ENCODE measurements at regions of chr19 and their contacts with region 1.

Region 1: DNA sequence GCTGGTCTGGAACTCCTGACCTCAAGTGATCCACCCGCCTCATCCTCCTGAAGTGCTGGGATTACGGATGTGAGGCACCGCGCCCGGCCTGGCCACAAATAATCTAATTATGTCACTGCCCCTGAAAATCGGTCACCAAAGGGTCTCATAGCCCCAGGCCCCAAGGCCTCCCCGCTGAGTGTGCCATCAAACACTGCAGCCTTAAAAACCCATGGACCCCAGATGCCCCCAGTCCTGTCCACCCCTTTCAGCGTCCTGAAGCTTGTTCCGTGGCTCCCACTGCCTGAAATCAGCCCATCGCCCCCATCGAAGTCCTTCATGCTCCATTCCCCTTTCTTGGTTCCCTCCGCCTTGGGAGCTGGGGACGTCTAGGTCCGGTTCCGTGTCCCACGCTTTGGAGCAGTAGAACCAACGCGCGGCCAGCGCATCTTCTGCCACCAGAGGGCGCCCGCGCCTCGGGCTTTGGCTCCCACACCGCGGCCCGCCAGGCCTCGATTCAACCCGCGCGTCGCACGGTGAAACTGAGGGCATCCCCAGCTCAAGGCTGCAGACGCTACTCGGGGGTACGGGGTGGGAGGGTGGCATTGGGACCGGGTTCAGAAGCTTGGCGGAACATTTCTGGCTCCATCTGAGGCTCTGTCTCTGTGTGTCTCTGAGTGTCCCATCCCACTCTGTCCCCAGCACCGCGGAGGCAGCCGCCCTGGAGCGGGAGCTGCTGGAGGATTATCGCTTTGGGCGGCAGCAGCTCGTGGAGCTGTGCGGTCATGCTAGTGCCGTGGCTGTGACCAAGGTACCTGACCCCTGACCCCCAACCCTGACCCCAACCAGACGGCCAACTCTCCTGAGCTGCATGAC is 3.5 kb downstream of the YJEFN3 start:
- DNase-seq: no peak
- H3K4me3 ChIP-seq: no peak overlapping the region
- H3K27ac ChIP-seq: no peak overlapping the region
- H3K27me3 ChIP-seq: no peaks in the 10 kb centered on the region
- CTCF ChIP-seq: peak; percentile 97

Region 2: DNA sequence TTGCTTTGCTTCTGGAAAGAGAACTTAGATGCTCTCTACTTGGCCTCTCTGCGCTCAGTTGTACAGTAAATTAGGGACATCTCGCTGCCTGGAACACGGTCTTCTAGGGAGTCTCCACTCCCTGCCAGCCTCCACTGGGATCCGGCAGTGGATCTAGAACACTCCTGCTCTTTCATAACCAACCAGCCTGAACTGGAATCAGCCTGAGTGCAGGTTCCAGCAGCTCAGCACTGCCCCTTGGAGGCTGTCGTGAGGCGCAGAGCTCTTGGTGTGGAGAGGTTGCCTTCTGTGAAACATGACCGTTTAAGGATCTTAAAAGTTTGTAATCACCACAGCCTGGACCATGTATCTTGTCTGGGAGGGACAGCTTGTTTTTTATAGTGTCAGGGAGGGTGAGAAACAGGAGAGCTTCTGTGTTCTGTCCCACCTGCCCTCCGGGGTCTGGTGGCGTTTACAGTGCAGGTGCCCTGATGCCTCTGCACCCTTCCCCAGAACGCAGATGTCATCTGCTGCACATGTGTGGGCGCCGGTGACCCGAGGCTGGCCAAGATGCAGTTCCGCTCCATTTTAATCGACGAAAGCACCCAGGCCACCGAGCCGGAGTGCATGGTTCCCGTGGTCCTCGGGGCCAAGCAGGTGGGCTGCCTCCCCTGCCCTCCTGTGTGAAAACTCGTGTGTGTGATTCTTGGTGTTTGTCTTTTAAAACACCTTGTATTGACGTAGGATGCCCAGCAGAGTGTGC is 675.6 kb before region 1 on chr19:
- CTCF ChIA-PET with region 1: no interaction called
- POLR2A ChIA-PET with region 1: no interaction called
- DNase-seq: no peak
- H3K4me3 ChIP-seq: no peak overlapping the region
- H3K27ac ChIP-seq: no peak overlapping the region
- H3K27me3 ChIP-seq: no peaks in the 10 kb centered on the region
- CTCF ChIP-seq: peak; percentile 50

Region 3: GRCh38 chr19:19591133-19591825 is 59.1 kb after region 1 on chr19:
- CTCF ChIA-PET with region 1: interaction called, 14 read pairs
- POLR2A ChIA-PET with region 1: interaction called, 7 read pairs
- DNase-seq: peak; percentile 95
- H3K4me3 ChIP-seq: no peak overlapping the region; the same call in 1 of the 2 replicates
- H3K27ac ChIP-seq: peak overlapping the region; percentile 96
- H3K27me3 ChIP-seq: no peaks in the 10 kb centered on the region
- CTCF ChIP-seq: no peak

Region 4: DNA sequence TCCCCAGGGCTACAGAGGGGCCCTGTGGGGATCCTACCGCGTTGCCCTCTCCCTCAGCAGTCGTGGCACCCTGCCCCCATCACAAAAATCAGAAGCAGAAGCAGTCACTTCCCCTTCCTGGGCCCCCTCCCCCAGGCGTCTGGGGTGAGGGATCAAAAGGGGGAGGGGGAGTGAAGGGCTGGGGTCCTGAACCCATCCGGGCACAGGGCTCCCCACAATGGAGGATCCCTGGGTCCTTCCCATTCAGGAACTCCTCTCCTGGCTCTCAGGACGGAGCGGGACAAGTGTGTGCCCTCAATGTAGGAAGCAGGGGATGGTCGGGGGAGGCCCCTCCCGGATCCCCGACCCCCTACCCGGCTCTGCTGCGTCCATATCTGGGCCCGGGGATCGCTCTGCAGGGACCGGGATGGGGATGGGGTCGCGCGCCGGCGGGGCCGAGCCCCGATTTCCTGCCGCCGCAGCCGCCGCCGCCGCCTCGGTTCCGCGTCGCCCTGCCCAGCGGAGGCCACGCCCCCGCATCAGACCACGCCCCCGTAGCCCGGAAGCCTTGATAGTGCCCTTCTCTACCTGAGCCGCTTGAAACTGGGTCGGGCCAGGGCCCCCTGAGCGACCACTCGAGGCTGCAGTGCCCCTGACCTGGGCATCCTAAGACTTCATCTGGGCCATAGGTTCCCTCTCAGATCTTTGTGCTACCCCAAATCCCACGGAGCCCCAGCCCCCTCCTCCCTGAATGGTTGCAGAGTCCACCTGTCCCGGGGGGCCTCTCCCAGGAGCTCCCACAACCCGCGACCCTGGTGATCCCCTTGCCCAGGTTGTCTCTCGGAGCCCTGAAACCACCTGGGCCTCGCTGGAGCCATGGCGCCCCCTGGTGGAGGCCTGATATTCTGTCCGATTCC is 111.2 kb after region 1 on chr19 and contains the start of gene GMIP:
- CTCF ChIA-PET with region 1: interaction called, 94 read pairs
- POLR2A ChIA-PET with region 1: interaction called, 8 read pairs
- DNase-seq: no peak
- H3K4me3 ChIP-seq: peak within 1 kb of the TSS; percentile 88
- H3K27ac ChIP-seq: peak within 1 kb of the TSS; percentile 21
- H3K27me3 ChIP-seq: no peaks in the 10 kb centered on the region
- CTCF ChIP-seq: peak; percentile 88
- polyA plus RNA-seq, gene GMIP: 3.1 and 3.8 TPM in 2 replicates

Region 5: GRCh38 chr19:19650331-19650730 is 118.2 kb after region 1 on chr19:
- CTCF ChIA-PET with region 1: interaction called, 94 read pairs
- POLR2A ChIA-PET with region 1: interaction called, 3 read pairs
- DNase-seq: no peak
- H3K4me3 ChIP-seq: no peak overlapping the region
- H3K27ac ChIP-seq: no peak overlapping the region
- H3K27me3 ChIP-seq: no peaks in the 10 kb centered on the region
- CTCF ChIP-seq: no peak